Activated naive CD4-positive, alpha-beta T cell treated with anti-CD3 and anti-CD28 coated beads, Interleukin-2, amount 10 ng/mL, durations not matched to agents 7 days and 5 days (primary cell): ENCODE measurements at regions of chr3 and their contacts with region 1.

Region 1: DNA sequence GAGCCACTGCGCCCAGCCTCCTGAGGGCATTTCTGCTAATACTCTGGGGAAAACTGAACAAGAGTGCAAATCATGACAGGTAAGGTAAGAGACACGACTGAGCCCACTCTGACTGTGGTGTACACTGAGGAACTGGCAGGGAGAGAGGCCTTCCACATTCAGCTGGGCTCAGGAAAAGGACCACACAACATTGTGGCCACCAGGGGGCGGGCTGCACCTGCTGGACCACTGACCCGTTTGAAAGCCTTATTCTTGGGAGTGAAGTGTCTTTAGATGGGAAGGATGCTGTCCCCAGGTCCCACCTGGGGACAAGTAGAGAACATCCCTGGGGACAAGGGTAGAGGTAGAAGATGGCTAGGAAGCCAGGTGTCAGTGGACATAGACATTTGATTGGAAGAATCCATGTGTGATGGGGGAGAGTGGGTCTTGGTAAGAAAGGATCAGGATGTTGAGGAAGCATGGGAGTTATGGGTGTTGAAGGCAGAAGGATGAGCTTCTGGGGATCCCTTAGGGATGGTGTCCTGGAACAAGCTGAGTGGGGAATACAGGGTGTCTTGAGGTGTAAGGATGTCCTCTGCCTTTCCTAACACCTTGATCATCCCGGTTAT is 6.2 kb upstream of the CTDSPL start:
- DNase-seq: peak; percentile 83
- H3K4me3 Mint-ChIP-seq: no peak overlapping the region
- H3K27ac Mint-ChIP-seq: no peak overlapping the region
- H3K4me1 Mint-ChIP-seq: peaks cover 6% of the 10 kb centered on the region
- H3K27me3 Mint-ChIP-seq: peaks cover 27% of the 10 kb centered on the region

Region 2: GRCh38 chr3:37661615-37662306 is 193.7 kb before region 1 on chr3:
- CTCF ChIA-PET with region 1: no interaction called
- DNase-seq: no peak
- H3K4me3 Mint-ChIP-seq: no peak overlapping the region
- H3K27ac Mint-ChIP-seq: no peak overlapping the region
- H3K4me1 Mint-ChIP-seq: no peaks in the 10 kb centered on the region
- H3K27me3 Mint-ChIP-seq: no peaks in the 10 kb centered on the region

Region 3: DNA sequence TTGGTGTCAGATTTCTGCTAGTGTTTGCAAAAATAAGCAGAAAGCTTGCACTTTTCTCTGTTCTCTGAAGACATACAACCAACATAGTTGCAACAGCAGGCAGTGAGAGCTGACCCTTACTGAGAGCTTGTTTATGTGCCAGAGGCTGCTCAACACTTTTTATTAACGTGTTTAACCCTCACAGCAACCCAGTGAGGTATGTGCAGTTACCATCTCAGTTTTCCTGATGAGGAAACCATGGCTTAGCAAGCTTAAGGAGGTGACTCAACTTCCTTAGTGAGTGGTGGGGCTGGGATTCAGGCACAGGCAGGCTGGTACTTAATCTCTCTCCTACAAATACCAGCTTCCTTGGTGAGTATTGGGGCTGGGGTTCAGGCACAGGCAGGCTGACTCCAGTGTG is 151.8 kb before region 1 on chr3:
- CTCF ChIA-PET with region 1: no interaction called
- DNase-seq: no peak
- H3K4me3 Mint-ChIP-seq: no peak overlapping the region
- H3K27ac Mint-ChIP-seq: no peak overlapping the region
- H3K4me1 Mint-ChIP-seq: no peaks in the 10 kb centered on the region
- H3K27me3 Mint-ChIP-seq: peaks cover 24% of the 10 kb centered on the region

Region 4: DNA sequence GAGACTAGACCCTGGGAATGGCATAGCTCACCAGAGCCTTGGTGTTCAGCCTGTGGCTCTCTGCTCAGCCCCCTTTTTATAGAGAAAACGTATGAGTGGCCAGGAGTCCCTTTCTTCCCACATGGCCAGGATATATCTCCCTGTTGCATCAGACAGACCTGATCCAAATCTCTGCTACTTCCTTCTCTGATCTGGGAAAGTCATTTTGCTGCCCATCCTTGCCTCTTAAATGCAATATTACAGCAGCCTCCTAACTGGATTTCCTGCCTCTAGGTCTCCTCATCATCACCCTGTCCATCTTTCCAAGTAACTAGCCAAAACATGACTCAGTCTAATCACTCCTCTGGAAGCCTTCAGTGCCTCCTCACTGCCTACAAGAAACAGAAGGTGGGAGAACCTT is 49.1 kb after region 1 on chr3:
- CTCF ChIA-PET with region 1: interaction called, 10 read pairs
- DNase-seq: no peak
- H3K4me3 Mint-ChIP-seq: no peak overlapping the region
- H3K27ac Mint-ChIP-seq: no peak overlapping the region
- H3K4me1 Mint-ChIP-seq: peaks cover 32% of the 10 kb centered on the region
- H3K27me3 Mint-ChIP-seq: peaks cover 21% of the 10 kb centered on the region